Thyroid gland (tissue), 4 donors: ENCODE measurements at regions of chr1 and their contacts with region 1.

Region 1: GRCh38 chr1:38026592-38027200 is 14.2 kb downstream of the UTP11 start:
- DNase-seq: peak; percentile 69 to 71
- H3K4me3 ChIP-seq: no peak overlapping the region
- H3K27ac ChIP-seq: no peak overlapping the region
- H3K4me1 ChIP-seq: peaks cover 0 to 14% of the 10 kb centered on the region in 2 donors
- H3K27me3 ChIP-seq: no peaks in the 10 kb centered on the region
- CTCF ChIP-seq: peak in 5 of 6 experiments; percentile 28 to 67 (median 63)
- POLR2A ChIP-seq: no peak

Region 2: GRCh38 chr1:37807555-37808368 is 218.9 kb before region 1 on chr1 and contains the starts of genes C1orf122 and YRDC:
- intact Hi-C with region 1: no loop called
- DNase-seq: peak; percentile 94 to 95
- H3K4me3 ChIP-seq: peak within 1 kb of the TSS; percentile 84 to 86 (median 85)
- H3K27ac ChIP-seq: peak within 1 kb of the TSS; percentile 80 to 97 (median 88)
- H3K4me1 ChIP-seq: peaks cover 13 to 17% of the 10 kb centered on the region in 2 donors
- H3K27me3 ChIP-seq: no peaks in the 10 kb centered on the region
- CTCF ChIP-seq: no peak
- POLR2A ChIP-seq: peak; percentile 30 to 80
- total RNA-seq, gene C1orf122: 35.4 to 164 (median 69.9) TPM
- total RNA-seq, gene YRDC: 7.1 to 15.6 (median 10.9) TPM

Region 3: GRCh38 chr1:38834937-38835827 is 808.5 kb after region 1 on chr1:
- intact Hi-C with region 1: loop called (anchors 10 kb)
- DNase-seq: peak; percentile 29 to 36
- H3K4me3 ChIP-seq: no peak overlapping the region
- H3K27ac ChIP-seq: no peak overlapping the region
- H3K4me1 ChIP-seq: no peaks in the 10 kb centered on the region
- H3K27me3 ChIP-seq: no peaks in the 10 kb centered on the region
- CTCF ChIP-seq: peak; percentile 22 to 74 (median 73)
- POLR2A ChIP-seq: no peak